ENCODE measurements at regions of chr12 and their contacts with region 1.

Region 1: GRCh38 chr12:116159175-116159574 is 118.3 kb downstream of the MED13L start:
- DNase-seq: no peak
- H3K4me3 ChIP-seq: no peak overlapping the region
- H3K27ac ChIP-seq: no peak overlapping the region
- H3K4me1 ChIP-seq: no peaks in the 10 kb centered on the region
- H3K27me3 ChIP-seq: no peaks in the 10 kb centered on the region
- CTCF ChIP-seq: no peak
- POLR2A ChIP-seq: no peak

Region 2: DNA sequence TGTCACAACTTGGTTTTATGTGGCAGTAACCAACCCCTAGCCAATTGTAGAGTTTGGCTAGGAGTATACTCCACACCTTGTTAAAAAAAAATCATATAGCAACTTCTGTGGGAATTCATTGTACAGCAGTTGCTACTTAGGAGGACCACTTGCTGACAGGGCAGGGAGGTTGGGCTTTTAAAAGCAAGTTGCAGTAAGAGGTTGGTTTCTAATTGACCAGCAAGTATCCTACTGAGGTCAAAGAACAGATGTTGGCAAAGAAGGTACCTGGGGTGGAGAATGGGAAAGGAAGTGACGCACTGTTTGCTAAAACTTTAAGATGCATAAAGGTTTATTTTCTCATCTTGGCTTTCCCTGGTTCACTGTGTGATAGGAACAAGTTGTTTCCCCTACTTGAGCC is 1579.8 kb before region 1 on chr12:
- intact Hi-C with region 1: loop called (anchors 10 kb)
- DNase-seq: no peak
- H3K4me3 ChIP-seq: no peak overlapping the region
- H3K27ac ChIP-seq: no peak overlapping the region
- H3K4me1 ChIP-seq: no peaks in the 10 kb centered on the region
- H3K27me3 ChIP-seq: peaks cover 0 to 4% of the 10 kb centered on the region in 2 donors
- CTCF ChIP-seq: no peak
- POLR2A ChIP-seq: no peak